HepG2 (cell line): ENCODE measurements at regions of chr9 and their contacts with region 1.

Region 1: DNA sequence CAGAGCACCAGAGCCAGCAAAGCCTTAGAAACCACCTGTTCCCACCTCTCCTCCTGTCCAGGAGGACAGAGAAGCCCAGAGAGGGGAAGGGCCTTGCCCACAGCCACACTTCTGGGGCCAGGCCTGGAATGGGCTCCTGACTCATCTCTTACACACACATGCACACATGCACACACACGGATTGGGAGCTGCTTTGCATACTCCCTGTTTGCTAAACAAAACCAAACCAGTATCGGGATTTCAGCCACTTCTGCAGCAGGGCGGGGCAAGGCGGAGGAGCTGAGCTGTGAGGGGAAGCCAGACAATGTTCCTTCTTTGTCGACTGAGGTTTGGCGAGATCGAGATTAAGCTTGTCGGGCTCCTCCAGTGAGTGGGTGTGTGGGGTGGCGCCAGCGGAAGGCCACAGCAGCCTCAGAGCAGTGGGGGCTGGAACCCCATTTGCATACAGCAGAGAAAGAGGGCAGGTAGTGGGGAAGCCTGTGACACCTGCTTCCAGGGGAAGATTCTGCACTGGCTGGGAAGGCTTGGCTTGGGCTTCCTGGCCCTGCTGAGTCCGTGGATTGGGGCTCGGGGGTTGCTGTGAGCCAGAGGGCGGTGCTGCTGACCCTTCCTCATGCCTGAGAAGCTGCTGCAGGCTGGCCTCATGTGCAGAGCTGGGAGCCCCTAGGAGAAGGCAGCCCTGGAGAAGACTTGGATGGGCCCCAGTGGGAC is 16.1 kb downstream of the GFI1B start:
- DNase-seq: no peak
- ATAC-seq: peak; percentile 46
- H3K4me3 ChIP-seq: peak overlapping the region in 2 of 3 experiments; percentile 43 to 51; a peak in 2 of 6 replicates
- H3K27ac ChIP-seq: no peak overlapping the region
- H3K4me1 ChIP-seq: peaks cover 78% of the 10 kb centered on the region
- H3K27me3 ChIP-seq: peaks cover 5 to 35% of the 10 kb centered on the region in 2 experiments
- CTCF ChIP-seq: no peak
- EP300 ChIP-seq: no peak
- POLR2A ChIP-seq: no peak
- RAD21 ChIP-seq: no peak

Region 2: DNA sequence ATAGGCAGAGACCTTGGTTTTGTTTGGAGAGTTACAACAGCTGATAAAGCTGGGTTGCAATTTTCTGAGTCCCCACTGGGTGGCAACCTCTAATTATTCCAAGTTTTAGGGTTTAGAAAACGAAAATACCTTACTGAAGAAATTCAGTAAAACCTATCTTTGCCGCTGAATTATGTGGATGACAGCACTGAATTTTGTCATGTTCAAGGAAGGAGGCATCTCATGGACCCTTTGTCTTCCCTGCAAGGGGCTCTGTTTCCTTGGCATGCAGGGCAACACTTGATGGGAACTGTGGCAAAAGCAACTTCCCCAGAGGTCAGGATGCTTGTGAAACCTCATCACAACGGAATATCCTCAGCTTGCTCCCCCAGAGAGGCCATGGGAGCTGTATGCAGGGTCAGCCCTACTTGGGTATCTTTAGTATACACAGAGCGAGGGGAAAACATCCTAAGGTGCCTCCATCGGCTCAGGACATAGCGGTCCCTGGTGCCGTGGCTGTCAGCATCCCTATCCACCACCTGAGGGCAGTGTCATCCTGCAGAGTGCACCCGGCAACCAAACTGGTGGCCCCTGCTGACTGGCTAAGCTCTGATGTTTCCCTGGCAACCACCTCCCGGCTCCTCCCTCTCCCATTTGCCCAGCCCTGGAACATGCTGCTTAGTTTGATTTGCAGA is 1454.8 kb after region 1 on chr9:
- CTCF ChIA-PET with region 1: no interaction called
- POLR2A ChIA-PET with region 1: no interaction called
- in situ Hi-C with region 1: no loop called
- intact Hi-C with region 1: loop called (anchors 10 kb)
- DNase-seq: peak; percentile 77
- ATAC-seq: peak; percentile 87
- H3K4me3 ChIP-seq: no peak overlapping the region
- H3K27ac ChIP-seq: no peak overlapping the region
- H3K4me1 ChIP-seq: no peaks in the 10 kb centered on the region
- H3K27me3 ChIP-seq: peaks cover 0 to 2% of the 10 kb centered on the region in 2 experiments; a peak in 1 of 5 replicates
- CTCF ChIP-seq: peak; percentile 93
- EP300 ChIP-seq: no peak
- POLR2A ChIP-seq: no peak
- RAD21 ChIP-seq: peak; percentile 89